ENCODE measurements at regions of chr11 and their contacts with region 1.

Region 1: DNA sequence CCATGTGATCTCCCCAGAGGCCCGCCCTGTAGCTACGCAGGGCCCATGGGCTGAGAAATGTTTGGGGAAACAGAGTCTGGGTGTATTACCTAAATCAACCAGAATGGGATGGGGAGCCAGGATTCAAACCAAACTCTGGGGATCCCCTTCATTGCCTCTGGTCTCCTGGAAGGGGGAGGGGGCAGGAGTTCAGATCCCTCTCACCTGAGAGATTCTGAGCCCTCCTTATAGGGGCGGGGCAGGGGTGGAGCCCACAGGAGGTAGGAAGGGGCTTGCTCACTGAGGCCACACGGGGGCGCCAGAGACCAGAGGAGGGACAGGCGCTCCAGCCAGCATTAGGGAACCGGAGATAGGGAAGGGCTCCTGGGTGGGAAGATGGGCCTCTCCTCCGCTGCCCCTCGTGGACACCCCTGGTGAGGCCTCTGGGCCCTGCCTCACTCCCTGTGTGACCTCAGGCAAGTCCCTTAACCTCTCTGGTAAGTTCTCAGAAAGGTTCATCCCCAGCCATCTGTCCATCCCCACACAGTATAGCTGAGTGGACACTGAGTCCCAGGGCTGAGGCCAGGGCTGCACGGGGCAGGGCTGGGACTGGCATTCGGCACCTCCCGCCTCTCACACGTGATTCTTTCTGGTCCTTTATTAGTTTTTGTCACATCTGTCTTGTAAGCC is 2.7 kb upstream of the CDC42BPG start:
- DNase-seq: peak; percentile 86 to 95
- H3K4me3 ChIP-seq: no peak overlapping the region
- H3K27ac ChIP-seq: peak overlapping the region in 1 of 2 donors; percentile 36
- H3K4me1 ChIP-seq: peaks cover 11 to 19% of the 10 kb centered on the region in 2 donors
- H3K27me3 ChIP-seq: no peaks in the 10 kb centered on the region
- CTCF ChIP-seq: peak; percentile 87 to 99 (median 98)
- POLR2A ChIP-seq: no peak

Region 2: GRCh38 chr11:64877879-64878493 is 30.9 kb after region 1 on chr11:
- intact Hi-C with region 1: loop called (anchors 1 kb)
- DNase-seq: no peak
- H3K4me3 ChIP-seq: peak overlapping the region; percentile 61 to 93 (median 79)
- H3K27ac ChIP-seq: peak overlapping the region; percentile 96 to 99
- H3K4me1 ChIP-seq: peaks cover 19% of the 10 kb centered on the region in 2 donors
- H3K27me3 ChIP-seq: no peaks in the 10 kb centered on the region
- CTCF ChIP-seq: no peak
- POLR2A ChIP-seq: no peak

Region 3: GRCh38 chr11:64894797-64895452 is 47.8 kb after region 1 on chr11:
- intact Hi-C with region 1: loop called (anchors 5 kb)
- DNase-seq: no peak
- H3K4me3 ChIP-seq: no peak overlapping the region
- H3K27ac ChIP-seq: no peak overlapping the region
- H3K4me1 ChIP-seq: no peaks in the 10 kb centered on the region
- H3K27me3 ChIP-seq: no peaks in the 10 kb centered on the region
- CTCF ChIP-seq: no peak
- POLR2A ChIP-seq: no peak

Measured in breast epithelium (tissue), 4 donors.